ENCODE measurements at regions of chr2 and their contacts with region 1.

Region 1: GRCh38 chr2:174259981-174260380 is 11.6 kb upstream of the OLA1 start:
- DNase-seq: no peak
- ATAC-seq: no peak
- H3K4me3 ChIP-seq: no peak overlapping the region
- H3K27ac ChIP-seq: no peak overlapping the region
- H3K4me1 ChIP-seq: 0 out of 2 replicates have a peak, but pooled peaks cover 3% of the 10 kb centered on the region
- H3K27me3 ChIP-seq: no peaks in the 10 kb centered on the region
- CTCF ChIP-seq: no peak

Region 2: GRCh38 chr2:174248998-174249592 is 10.9 kb before region 1 on chr2:
- CTCF ChIA-PET with region 1: no interaction called
- POLR2A ChIA-PET with region 1: interaction called, 15 read pairs
- in situ Hi-C with region 1: no loop called
- intact Hi-C with region 1: no loop called
- DNase-seq: no peak
- ATAC-seq: no peak
- H3K4me3 ChIP-seq: peak overlapping the region; percentile 63 to 88
- H3K27ac ChIP-seq: peak overlapping the region; percentile 98
- H3K4me1 ChIP-seq: peaks cover 5% of the 10 kb centered on the region
- H3K27me3 ChIP-seq: no peaks in the 10 kb centered on the region
- CTCF ChIP-seq: no peak

Region 3: DNA sequence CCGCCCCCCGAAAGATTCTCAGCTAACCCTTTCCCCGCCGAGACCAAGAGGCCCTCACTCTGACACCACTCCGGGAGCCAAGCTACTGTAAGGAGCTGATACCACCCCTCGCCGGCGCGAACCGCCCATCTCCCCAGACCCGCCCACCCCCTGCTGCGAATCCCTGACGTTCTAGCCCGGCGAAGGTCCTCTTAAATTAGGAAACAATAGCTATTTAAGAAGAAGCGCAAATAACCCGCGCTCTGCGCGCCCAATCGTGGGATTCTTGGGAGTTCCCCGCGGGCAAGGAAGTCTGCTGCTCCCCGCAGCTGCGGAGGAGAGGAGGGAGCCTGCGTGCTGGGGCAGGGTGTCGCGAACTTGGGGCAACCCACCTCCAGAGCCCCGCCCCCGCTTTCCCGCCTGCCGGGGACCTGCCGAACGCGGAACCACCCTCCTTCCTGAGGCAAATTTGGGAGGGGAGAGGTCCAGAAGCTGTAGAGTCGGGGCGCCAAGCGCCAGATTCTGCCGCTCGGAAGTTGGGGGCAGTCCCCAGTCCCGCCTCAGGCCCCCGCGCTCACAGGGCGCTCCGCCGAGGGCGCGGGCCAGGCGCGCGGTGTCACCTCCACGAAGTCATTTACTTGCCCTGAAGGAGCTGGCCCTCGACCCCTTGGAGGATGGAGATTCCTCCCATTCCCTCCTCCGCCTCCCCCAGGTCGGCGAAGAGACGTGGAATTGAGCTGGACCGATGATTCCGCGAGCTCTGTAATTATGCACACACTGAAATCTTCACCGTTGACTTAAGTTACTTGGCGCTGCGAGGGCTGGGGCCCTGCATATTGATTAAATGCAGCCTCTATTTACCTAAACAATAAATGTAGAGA is 66.4 kb after region 1 on chr2:
- CTCF ChIA-PET with region 1: interaction called, 10 read pairs
- POLR2A ChIA-PET with region 1: no interaction called
- in situ Hi-C with region 1: no loop called
- intact Hi-C with region 1: no loop called
- DNase-seq: no peak
- ATAC-seq: peak; percentile 57
- H3K4me3 ChIP-seq: peak overlapping the region; percentile 49 to 65
- H3K27ac ChIP-seq: no peak overlapping the region
- H3K4me1 ChIP-seq: no peaks in the 10 kb centered on the region
- H3K27me3 ChIP-seq: no peaks in the 10 kb centered on the region
- CTCF ChIP-seq: no peak

Region 4: GRCh38 chr2:174341286-174341994 is 81.5 kb after region 1 on chr2:
- CTCF ChIA-PET with region 1: no interaction called
- POLR2A ChIA-PET with region 1: no interaction called
- in situ Hi-C with region 1: no loop called
- intact Hi-C with region 1: no loop called
- DNase-seq: peak; percentile 41
- ATAC-seq: peak; percentile 93
- H3K4me3 ChIP-seq: peak overlapping the region; percentile 36 to 55
- H3K27ac ChIP-seq: no peak overlapping the region
- H3K4me1 ChIP-seq: peaks cover 10% of the 10 kb centered on the region
- H3K27me3 ChIP-seq: no peaks in the 10 kb centered on the region
- CTCF ChIP-seq: peak; percentile 98

Measured in Panc1 (cell line).